ENCODE measurements at regions of chr1 and their contacts with region 1.

Region 1: GRCh38 chr1:160519642-160520435 is 3.2 kb downstream of the SLAMF6 start:
- DNase-seq: no peak
- H3K4me3 Mint-ChIP-seq: peak overlapping the region; percentile 33
- H3K27ac Mint-ChIP-seq: peak overlapping the region; percentile 66
- H3K4me1 Mint-ChIP-seq: peaks cover 34% of the 10 kb centered on the region
- H3K27me3 Mint-ChIP-seq: peaks cover 10% of the 10 kb centered on the region
- CTCF ChIP-seq: peak; percentile 41

Region 2: GRCh38 chr1:160539990-160540858 is 20.4 kb after region 1 on chr1:
- CTCF ChIA-PET with region 1: no interaction called
- intact Hi-C with region 1: loop called (anchors 1 kb)
- DNase-seq: no peak
- H3K4me3 Mint-ChIP-seq: no peak overlapping the region
- H3K27ac Mint-ChIP-seq: peak overlapping the region; percentile 15
- H3K4me1 Mint-ChIP-seq: peaks cover 50% of the 10 kb centered on the region
- H3K27me3 Mint-ChIP-seq: no peaks in the 10 kb centered on the region
- CTCF ChIP-seq: no peak